Breast epithelium (tissue), 4 donors: ENCODE measurements at regions of chr1 and their contacts with region 1.

Region 1: GRCh38 chr1:177082855-177083693 is 81.4 kb downstream of the ASTN1 start:
- DNase-seq: no peak
- H3K4me3 ChIP-seq: no peak overlapping the region
- H3K27ac ChIP-seq: no peak overlapping the region
- H3K4me1 ChIP-seq: no peaks in the 10 kb centered on the region
- H3K27me3 ChIP-seq: no peaks in the 10 kb centered on the region
- CTCF ChIP-seq: no peak
- POLR2A ChIP-seq: no peak

Region 2: DNA sequence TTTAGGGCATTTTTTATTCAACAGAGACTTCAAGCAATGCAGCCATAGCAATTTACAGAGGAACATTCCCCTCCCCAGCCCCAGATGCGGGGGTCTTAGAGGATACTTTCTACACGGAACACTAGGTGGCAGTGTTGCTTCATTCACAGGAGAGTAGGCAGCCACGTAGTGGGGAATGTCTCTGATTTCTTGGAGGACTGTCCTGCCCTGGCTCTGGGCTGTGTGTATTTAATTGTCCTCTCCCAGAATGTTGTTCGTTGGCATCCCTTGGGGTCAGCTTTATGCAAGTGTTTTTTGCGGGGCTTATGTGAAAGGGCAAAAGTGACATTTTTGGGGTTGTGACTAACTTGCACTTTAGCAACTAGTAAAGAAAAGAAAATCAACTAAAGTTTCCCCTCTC is 523.2 kb before region 1 on chr1:
- intact Hi-C with region 1: no loop called
- DNase-seq: no peak
- H3K4me3 ChIP-seq: no peak overlapping the region
- H3K27ac ChIP-seq: no peak overlapping the region
- H3K4me1 ChIP-seq: no peaks in the 10 kb centered on the region
- H3K27me3 ChIP-seq: peaks cover 0 to 16% of the 10 kb centered on the region in 2 donors
- CTCF ChIP-seq: peak; percentile 11 to 86 (median 68)
- POLR2A ChIP-seq: no peak

Region 3: GRCh38 chr1:176847052-176847451 is 236.0 kb before region 1 on chr1:
- intact Hi-C with region 1: no loop called
- DNase-seq: no peak
- H3K4me3 ChIP-seq: no peak overlapping the region
- H3K27ac ChIP-seq: no peak overlapping the region
- H3K4me1 ChIP-seq: no peaks in the 10 kb centered on the region
- H3K27me3 ChIP-seq: no peaks in the 10 kb centered on the region
- CTCF ChIP-seq: no peak
- POLR2A ChIP-seq: no peak

Region 4: DNA sequence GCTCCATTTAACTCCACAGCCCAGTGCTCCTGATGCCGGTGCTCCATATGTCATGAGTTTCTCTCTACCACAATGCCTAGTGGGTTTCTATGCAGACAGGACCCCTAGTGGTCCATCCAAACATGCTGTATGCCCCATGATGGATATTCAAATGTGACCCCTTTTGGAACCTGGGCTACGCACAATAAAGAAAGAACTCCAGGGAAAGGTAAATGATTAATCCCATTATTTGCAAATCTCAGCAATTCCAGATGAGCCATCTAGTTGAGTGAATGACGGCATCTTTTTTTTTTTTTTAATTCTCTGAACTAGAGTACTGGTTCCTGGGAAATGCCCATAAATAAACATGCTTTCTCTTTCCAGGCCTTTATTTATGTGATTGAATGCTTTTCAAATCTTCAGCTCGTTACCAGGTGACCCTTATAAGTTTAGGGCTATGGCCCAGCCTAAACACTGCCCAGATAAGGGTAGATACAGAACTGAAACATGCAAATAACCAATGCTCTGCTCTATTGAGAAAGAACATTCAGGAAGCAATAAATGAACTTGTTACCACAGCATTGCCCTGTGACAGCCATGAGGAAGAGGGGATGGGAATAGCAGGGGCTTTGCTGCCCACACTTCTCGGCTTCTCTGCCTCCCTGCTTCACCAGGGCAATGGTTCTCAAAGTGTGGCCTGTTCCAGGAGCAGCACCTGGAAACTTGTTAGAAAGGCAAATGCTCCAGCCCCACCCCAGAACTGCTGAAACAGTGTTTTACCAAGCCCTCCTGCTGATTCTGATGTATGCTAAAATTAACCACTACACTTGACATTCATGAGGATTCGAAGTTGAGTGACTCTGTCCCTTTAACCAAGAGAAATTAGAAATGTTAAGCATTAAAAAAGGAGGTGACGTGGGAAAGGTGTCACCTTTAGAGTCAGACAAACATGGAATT is 735.1 kb after region 1 on chr1:
- intact Hi-C with region 1: no loop called
- DNase-seq: no peak
- H3K4me3 ChIP-seq: no peak overlapping the region
- H3K27ac ChIP-seq: no peak overlapping the region
- H3K4me1 ChIP-seq: no peaks in the 10 kb centered on the region
- H3K27me3 ChIP-seq: no peaks in the 10 kb centered on the region
- CTCF ChIP-seq: no peak
- POLR2A ChIP-seq: no peak

Region 5: DNA sequence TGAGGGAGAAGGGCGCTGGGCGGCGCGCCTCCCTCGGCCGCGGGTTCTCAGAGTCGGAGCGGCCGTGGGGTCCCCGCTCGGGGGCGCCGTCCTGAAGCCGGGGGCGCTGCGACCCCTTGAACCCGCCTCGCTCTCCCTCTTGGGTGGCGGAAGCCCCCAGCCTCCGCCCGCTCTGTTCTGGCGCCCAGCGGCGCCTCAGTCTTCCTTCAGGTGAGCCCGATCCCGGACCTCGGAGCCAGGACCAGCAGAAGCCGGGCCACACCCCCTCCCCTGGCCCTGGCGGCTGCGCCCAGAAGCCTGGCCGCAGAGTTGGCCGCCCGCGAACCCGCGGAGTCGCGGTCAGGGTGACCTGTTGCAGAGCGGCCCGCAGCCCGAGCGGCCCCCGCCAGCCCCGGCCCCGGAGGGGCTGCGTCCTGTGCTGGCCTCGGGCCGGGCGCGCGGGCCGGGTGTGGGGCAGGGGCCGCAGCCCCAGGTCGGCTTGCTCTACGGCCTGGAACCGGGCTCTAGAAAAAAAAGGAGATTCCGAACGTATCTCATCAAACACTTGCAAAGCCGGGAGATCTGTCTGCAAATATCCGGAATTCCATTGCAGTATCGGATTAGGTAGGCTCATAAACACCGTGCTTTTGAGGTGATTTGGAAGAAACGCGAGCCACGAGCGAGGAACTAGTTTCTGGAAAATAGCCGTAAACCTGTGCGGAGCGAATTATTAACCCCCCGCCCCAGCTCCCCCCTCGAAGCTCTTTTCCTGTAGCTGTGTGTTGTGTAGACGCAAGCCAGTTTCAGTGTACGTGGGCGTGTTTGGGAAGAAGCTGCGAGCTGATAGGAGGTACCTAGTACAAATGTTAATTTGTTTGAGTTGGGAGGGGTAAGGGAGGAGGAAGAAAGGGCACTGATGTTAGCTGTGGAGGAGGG is 1642.8 kb after region 1 on chr1:
- intact Hi-C with region 1: loop called (anchors 5 kb)
- DNase-seq: peak; percentile 63 to 67
- H3K4me3 ChIP-seq: peak overlapping the region; percentile 88 to 97 (median 90)
- H3K27ac ChIP-seq: peak overlapping the region; percentile 92 to 95
- H3K4me1 ChIP-seq: no peaks in the 10 kb centered on the region
- H3K27me3 ChIP-seq: no peaks in the 10 kb centered on the region
- CTCF ChIP-seq: no peak
- POLR2A ChIP-seq: no peak